SK-N-SH (cell line): ENCODE measurements at regions of chr9 and their contacts with region 1.

Region 1: GRCh38 chr9:128034821-128035764 is 32.0 kb downstream of the NAIF1 start:
- DNase-seq: peak; percentile 82
- H3K4me3 ChIP-seq: no peak overlapping the region; a peak in 1 of 4 replicates
- H3K27ac ChIP-seq: no peak overlapping the region; a peak in 1 of 4 replicates
- H3K4me1 ChIP-seq: no peaks in the 10 kb centered on the region; a peak in 1 of 4 replicates
- H3K27me3 ChIP-seq: no peaks in the 10 kb centered on the region
- CTCF ChIP-seq: peak; percentile 72
- EP300 ChIP-seq: no peak
- RAD21 ChIP-seq: peak; percentile 96

Region 2: DNA sequence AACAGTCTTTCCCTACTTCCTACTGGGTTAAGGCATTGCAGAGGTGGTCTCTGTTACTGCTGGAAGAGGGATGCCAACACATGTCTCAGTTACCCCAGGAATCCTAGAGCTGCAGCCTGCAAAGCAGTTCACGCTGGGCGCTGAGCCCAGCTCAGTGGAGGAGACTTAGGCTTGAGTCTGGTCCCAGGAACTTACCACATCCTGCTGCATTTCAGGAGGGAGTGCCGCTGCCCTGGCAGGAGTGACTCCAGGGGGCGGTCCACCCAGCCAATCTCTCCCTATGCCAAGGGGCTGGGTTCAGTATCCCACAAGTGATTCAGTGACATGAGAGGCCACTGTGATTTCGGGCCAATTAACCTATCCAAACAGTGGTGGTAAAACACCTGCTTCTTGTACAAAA is 311.6 kb before region 1 on chr9:
- CTCF ChIA-PET with region 1: no interaction called
- POLR2A ChIA-PET with region 1: no interaction called
- DNase-seq: no peak
- H3K4me3 ChIP-seq: no peak overlapping the region
- H3K27ac ChIP-seq: no peak overlapping the region
- H3K4me1 ChIP-seq: peaks cover 0 to 8% of the 10 kb centered on the region in 2 experiments; a peak in 1 of 4 replicates
- H3K27me3 ChIP-seq: no peaks in the 10 kb centered on the region
- CTCF ChIP-seq: no peak
- EP300 ChIP-seq: no peak
- RAD21 ChIP-seq: no peak

Region 3: GRCh38 chr9:127930231-127931091 is 104.6 kb before region 1 on chr9 and contains the start of gene PIP5KL1:
- CTCF ChIA-PET with region 1: interaction called, 18 read pairs
- POLR2A ChIA-PET with region 1: no interaction called
- DNase-seq: peak; percentile 98
- H3K4me3 ChIP-seq: peak within 1 kb of the TSS; percentile 59 to 64
- H3K27ac ChIP-seq: peak within 1 kb of the TSS; percentile 80 to 91
- H3K4me1 ChIP-seq: peaks cover 7 to 31% of the 10 kb centered on the region in 2 experiments; a peak in 3 of 4 replicates
- H3K27me3 ChIP-seq: no peaks in the 10 kb centered on the region
- CTCF ChIP-seq: peak; percentile 40
- EP300 ChIP-seq: no peak
- RAD21 ChIP-seq: no peak
- polyA plus RNA-seq, gene PIP5KL1: 4.0 and 6.1 TPM in 2 replicates

Region 4: DNA sequence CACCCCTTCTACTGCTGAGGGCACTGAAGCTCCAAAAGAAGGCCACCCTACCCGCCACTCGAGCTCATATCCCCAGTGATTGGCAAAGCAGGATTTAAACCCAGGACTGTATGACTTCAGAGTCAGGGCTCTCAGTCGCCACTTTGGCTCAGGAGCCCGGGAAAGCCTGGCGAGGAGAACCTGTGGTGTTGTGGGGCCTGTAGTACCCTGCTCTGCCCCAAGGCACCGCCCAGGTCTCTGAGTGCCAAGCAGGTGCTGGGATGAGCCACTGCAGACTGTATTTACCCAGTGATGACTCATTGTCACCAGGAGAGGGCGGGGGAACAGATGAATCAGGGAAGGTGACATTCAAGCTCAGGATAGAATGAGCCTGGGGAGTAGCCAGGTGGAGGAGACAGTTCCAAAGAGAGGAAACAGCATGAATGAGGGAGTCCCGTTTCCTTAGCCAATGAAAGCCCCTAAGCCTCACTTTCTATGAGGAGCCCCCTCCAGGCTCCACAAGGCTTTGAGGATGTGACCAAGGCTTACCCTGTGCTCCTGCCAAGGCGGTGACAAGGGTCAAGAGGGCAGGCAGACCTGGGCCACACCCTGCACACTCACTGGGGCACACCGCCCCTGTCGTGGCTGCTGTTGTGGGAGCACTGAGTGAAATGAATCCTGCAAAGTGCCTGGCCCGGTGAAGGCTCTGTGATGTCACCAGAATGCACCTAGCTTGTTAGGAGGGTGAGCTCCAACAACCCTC is 79.6 kb before region 1 on chr9:
- CTCF ChIA-PET with region 1: interaction called, 125 read pairs
- POLR2A ChIA-PET with region 1: no interaction called
- DNase-seq: peak; percentile 79
- H3K4me3 ChIP-seq: no peak overlapping the region
- H3K27ac ChIP-seq: peak overlapping the region in 1 of 2 experiments; percentile 54; a peak in 1 of 4 replicates
- H3K4me1 ChIP-seq: peaks cover 0 to 46% of the 10 kb centered on the region in 2 experiments; a peak in 2 of 4 replicates
- H3K27me3 ChIP-seq: no peaks in the 10 kb centered on the region
- CTCF ChIP-seq: no peak
- EP300 ChIP-seq: no peak
- RAD21 ChIP-seq: peak; percentile 59

Region 5: GRCh38 chr9:127970401-127971313 is 64.4 kb before region 1 on chr9:
- CTCF ChIA-PET with region 1: interaction called, 51 read pairs
- POLR2A ChIA-PET with region 1: no interaction called
- DNase-seq: peak; percentile 10
- H3K4me3 ChIP-seq: no peak overlapping the region; a peak in 1 of 4 replicates
- H3K27ac ChIP-seq: peak overlapping the region; percentile 91 to 93
- H3K4me1 ChIP-seq: peaks cover 92 to 100% of the 10 kb centered on the region in 2 experiments
- H3K27me3 ChIP-seq: no peaks in the 10 kb centered on the region
- CTCF ChIP-seq: no peak
- EP300 ChIP-seq: no peak
- RAD21 ChIP-seq: no peak

Region 6: GRCh38 chr9:128020692-128021091 is 14.4 kb before region 1 on chr9:
- CTCF ChIA-PET with region 1: interaction called, 35 read pairs
- POLR2A ChIA-PET with region 1: no interaction called
- DNase-seq: peak; percentile 57
- H3K4me3 ChIP-seq: no peak overlapping the region
- H3K27ac ChIP-seq: no peak overlapping the region
- H3K4me1 ChIP-seq: peaks cover 3% of the 10 kb centered on the region in 2 experiments; a peak in 2 of 4 replicates
- H3K27me3 ChIP-seq: no peaks in the 10 kb centered on the region
- CTCF ChIP-seq: peak; percentile 39
- EP300 ChIP-seq: no peak
- RAD21 ChIP-seq: peak; percentile 37

Region 7: GRCh38 chr9:128051932-128052709 is 17.0 kb after region 1 on chr9:
- CTCF ChIA-PET with region 1: interaction called, 25 read pairs
- POLR2A ChIA-PET with region 1: no interaction called
- DNase-seq: no peak
- H3K4me3 ChIP-seq: no peak overlapping the region
- H3K27ac ChIP-seq: no peak overlapping the region
- H3K4me1 ChIP-seq: peaks cover 8 to 13% of the 10 kb centered on the region in 2 experiments; a peak in 3 of 4 replicates
- H3K27me3 ChIP-seq: no peaks in the 10 kb centered on the region
- CTCF ChIP-seq: no peak
- EP300 ChIP-seq: no peak
- RAD21 ChIP-seq: no peak

Region 8: GRCh38 chr9:128108784-128109709 is 74.0 kb after region 1 on chr9:
- CTCF ChIA-PET with region 1: no interaction called
- POLR2A ChIA-PET with region 1: no interaction called
- DNase-seq: peak; percentile 24
- H3K4me3 ChIP-seq: no peak overlapping the region
- H3K27ac ChIP-seq: no peak overlapping the region
- H3K4me1 ChIP-seq: peaks cover 0 to 4% of the 10 kb centered on the region in 2 experiments; a peak in 1 of 4 replicates
- H3K27me3 ChIP-seq: no peaks in the 10 kb centered on the region
- CTCF ChIP-seq: no peak
- EP300 ChIP-seq: no peak
- RAD21 ChIP-seq: no peak